ENCODE measurements at regions of chr12 and their contacts with region 1.

Region 1: DNA sequence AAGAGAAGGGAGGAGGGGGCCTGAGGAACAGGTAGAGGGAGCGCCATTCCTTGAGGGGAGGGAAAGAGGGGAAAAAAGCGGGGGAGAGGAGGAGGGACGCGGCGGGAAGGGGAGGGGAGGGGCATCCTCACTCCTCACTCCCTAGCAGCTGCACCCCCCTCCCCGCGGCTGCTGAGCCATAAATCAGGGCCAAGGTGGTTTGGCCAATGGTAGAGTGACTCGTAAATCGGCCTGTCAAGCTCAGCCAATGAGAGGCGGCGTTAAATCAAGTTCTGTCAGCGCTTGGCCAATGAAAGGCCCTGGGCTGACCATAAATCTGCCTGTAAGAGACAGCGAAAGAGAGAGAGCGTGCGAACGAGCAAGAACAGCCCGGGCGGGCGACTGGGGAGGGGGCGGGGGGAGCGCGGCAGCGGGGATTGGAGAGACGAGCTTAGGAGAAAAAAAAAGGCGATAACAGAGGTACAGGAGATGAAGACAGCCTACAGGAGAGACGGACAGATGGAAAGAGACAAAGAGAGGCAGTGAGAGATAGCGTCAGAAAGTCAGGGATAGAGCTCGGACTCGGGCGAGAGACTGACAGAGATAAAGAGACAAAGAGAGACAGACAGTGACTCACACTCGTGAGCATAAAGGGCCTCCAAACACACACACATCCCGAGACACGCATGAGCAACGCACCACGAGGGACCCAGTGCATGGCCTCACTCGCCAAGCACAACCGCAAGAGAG is 5.1 kb downstream of the GPR84 start:
- DNase-seq: peak in 1 of 2 donors; percentile 99
- H3K4me3 ChIP-seq: peak overlapping the region; percentile 52 to 75
- H3K27ac ChIP-seq: peak overlapping the region; percentile 92
- H3K4me1 ChIP-seq: peaks cover 24% of the 10 kb centered on the region
- H3K27me3 ChIP-seq: no peaks in the 10 kb centered on the region
- CTCF ChIP-seq: no peak
- POLR2A ChIP-seq: peak in 1 of 2 donors; percentile 38

Region 2: GRCh38 chr12:54279866-54280467 is 79.2 kb before region 1 on chr12 and contains the start of gene CBX5:
- intact Hi-C with region 1: loop called (anchors 5 kb)
- DNase-seq: peak in 1 of 2 donors; percentile 99
- H3K4me3 ChIP-seq: peak within 1 kb of the TSS; percentile 62 to 84
- H3K27ac ChIP-seq: peak within 1 kb of the TSS; percentile 84
- H3K4me1 ChIP-seq: peaks cover 60% of the 10 kb centered on the region
- H3K27me3 ChIP-seq: no peaks in the 10 kb centered on the region
- CTCF ChIP-seq: no peak
- POLR2A ChIP-seq: peak in 1 of 2 donors; percentile 84
- total RNA-seq, gene CBX5: 21.6 TPM